Esophagus muscularis mucosa (tissue), 4 donors: ENCODE measurements at regions of chr3 and their contacts with region 1.

Region 1: GRCh38 chr3:171695426-171695825 is 114.9 kb downstream of the PLD1 start:
- DNase-seq: no peak
- H3K4me3 ChIP-seq: no peak overlapping the region
- H3K27ac ChIP-seq: no peak overlapping the region
- H3K4me1 ChIP-seq: peaks cover 3 to 18% (median 16%) of the 10 kb centered on the region in 4 donors
- H3K27me3 ChIP-seq: no peaks in the 10 kb centered on the region
- CTCF ChIP-seq: no peak
- EP300 ChIP-seq: no peak
- POLR2A ChIP-seq: no peak

Region 2: DNA sequence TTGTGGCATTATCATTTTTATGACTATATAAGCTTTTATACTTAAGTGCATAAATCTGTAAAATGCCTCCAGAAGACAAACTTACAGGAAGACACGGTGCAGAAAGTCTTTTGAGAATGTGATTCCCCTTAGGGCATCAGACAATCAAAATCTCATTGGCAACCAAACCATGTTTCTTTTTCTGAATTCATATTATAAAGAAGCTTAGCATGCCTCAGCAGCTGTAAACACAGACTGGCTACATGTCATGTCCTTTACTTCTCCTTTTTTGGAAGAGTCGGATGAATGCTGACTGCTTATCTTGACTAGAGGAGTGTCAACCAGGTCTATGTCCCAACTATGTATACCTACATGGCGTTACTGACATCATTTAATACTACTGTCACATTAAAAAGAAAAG is 35.2 kb before region 1 on chr3:
- intact Hi-C with region 1: loop called (anchors 5 kb)
- DNase-seq: no peak
- H3K4me3 ChIP-seq: no peak overlapping the region
- H3K27ac ChIP-seq: no peak overlapping the region
- H3K4me1 ChIP-seq: peaks cover 2 to 9% (median 5%) of the 10 kb centered on the region in 4 donors
- H3K27me3 ChIP-seq: no peaks in the 10 kb centered on the region
- CTCF ChIP-seq: no peak
- EP300 ChIP-seq: no peak
- POLR2A ChIP-seq: no peak

Region 3: DNA sequence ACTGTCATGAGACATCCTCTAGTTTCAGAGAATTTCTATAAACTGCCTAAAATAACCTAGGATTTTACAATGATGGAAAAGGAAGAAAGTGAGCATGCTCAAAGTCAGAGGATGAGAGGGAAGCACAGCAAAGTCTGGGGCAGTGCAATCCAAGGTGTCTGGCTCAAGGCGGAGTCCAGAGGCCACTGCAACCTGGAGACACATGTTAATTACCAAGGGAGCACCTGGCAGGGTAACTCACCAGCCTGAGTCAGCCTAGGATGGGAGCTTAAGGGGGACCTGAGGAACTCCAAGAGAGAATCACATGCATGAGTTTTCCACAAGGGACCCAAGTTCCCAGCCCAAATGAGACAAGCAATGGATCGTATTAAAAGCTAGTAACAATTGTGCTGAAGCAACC is 65.1 kb after region 1 on chr3:
- intact Hi-C with region 1: loop called (anchors 5 kb)
- DNase-seq: no peak
- H3K4me3 ChIP-seq: no peak overlapping the region
- H3K27ac ChIP-seq: no peak overlapping the region
- H3K4me1 ChIP-seq: peaks cover 4 to 35% (median 12%) of the 10 kb centered on the region in 4 donors
- H3K27me3 ChIP-seq: no peaks in the 10 kb centered on the region
- CTCF ChIP-seq: no peak
- EP300 ChIP-seq: no peak
- POLR2A ChIP-seq: no peak